ENCODE measurements at regions of chr3 and their contacts with region 1.

Region 1: GRCh38 chr3:48439820-48440589 is at the starts of genes CCDC51 and TMA7:
- DNase-seq: peak; percentile 94 to 97
- H3K4me3 ChIP-seq: peak within 1 kb of the TSS; percentile 80 to 99 (median 94)
- H3K27ac ChIP-seq: peak within 1 kb of the TSS; percentile 80
- H3K4me1 ChIP-seq: peaks cover 0 to 8% (median 3%) of the 10 kb centered on the region in 4 experiments; a peak in 5 of 7 replicates
- H3K27me3 ChIP-seq: no peaks in the 10 kb centered on the region
- CTCF ChIP-seq: no peak
- EP300 ChIP-seq: no peak
- POLR2A ChIP-seq: peak; percentile 77 to 88; a peak in 2 of 3 replicates
- RAD21 ChIP-seq: no peak
- total RNA-seq, gene CCDC51: 20.3 and 21.3 TPM in 2 replicates
- total RNA-seq, gene TMA7: 305 and 322 TPM in 2 replicates

Region 2: DNA sequence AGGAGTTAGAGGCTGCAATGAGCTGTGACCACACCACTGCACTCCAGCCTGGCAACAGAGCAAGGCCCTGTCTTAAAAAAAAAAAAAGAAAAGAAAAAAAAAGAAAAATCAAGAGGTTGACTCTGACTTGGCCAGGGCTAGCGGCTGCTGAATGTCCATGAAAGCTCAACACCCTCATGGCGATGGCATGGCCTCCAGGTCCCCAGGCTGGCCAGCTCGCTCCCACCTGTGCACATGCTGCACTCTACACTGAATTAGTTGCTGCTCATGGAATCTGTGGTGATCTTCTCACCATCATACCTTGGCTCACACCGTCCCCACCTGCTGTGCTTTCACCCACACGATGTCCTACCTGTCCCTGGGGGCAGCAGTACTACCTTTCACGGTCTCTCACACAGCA is 240.0 kb before region 1 on chr3:
- CTCF ChIA-PET with region 1: interaction called, 23 read pairs
- POLR2A ChIA-PET with region 1: interaction called, 7 read pairs
- DNase-seq: no peak
- H3K4me3 ChIP-seq: no peak overlapping the region
- H3K27ac ChIP-seq: no peak overlapping the region
- H3K4me1 ChIP-seq: peaks cover 0 to 6% (median 5%) of the 10 kb centered on the region in 4 experiments; a peak in 6 of 7 replicates
- H3K27me3 ChIP-seq: no peaks in the 10 kb centered on the region
- CTCF ChIP-seq: no peak
- EP300 ChIP-seq: no peak
- POLR2A ChIP-seq: no peak
- RAD21 ChIP-seq: no peak

Region 3: GRCh38 chr3:48344867-48345507 is 95.0 kb before region 1 on chr3:
- CTCF ChIA-PET with region 1: interaction called, 10 read pairs
- POLR2A ChIA-PET with region 1: no interaction called
- DNase-seq: no peak
- H3K4me3 ChIP-seq: no peak overlapping the region
- H3K27ac ChIP-seq: no peak overlapping the region
- H3K4me1 ChIP-seq: no peaks in the 10 kb centered on the region
- H3K27me3 ChIP-seq: no peaks in the 10 kb centered on the region
- CTCF ChIP-seq: no peak
- EP300 ChIP-seq: no peak
- POLR2A ChIP-seq: no peak
- RAD21 ChIP-seq: no peak

Region 4: DNA sequence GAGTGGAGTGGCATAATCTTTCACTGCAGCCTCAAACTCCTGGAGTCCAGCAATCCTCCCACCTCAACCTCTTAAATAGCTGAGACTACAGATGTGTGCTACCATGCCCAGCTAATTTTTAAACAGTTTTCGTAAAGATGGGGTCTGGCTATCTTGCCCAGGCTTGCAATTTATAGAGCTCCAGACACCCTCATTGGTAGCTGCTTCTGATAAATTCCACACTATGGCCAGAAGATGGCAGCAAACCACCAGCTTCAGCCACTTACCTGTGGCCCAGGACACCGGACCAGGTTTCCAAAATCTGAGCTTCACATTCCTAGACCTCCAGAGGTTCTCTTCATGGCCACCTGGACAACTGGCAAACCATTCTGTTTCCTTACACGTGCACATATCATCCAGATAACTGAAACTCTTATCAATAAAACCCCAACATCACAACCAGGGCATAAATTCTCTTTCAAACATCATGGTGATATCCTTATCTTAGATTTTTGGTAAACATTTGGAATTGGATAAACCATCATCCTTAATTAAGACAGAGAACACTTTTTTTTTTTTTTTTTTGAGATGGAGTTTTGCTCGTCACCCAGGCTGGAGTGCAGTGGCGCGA is 39.1 kb before region 1 on chr3:
- CTCF ChIA-PET with region 1: interaction called, 220 read pairs
- POLR2A ChIA-PET with region 1: interaction called, 650 read pairs
- DNase-seq: peak; percentile 21 to 51
- H3K4me3 ChIP-seq: no peak overlapping the region
- H3K27ac ChIP-seq: no peak overlapping the region
- H3K4me1 ChIP-seq: peaks cover 0 to 7% (median 4%) of the 10 kb centered on the region in 4 experiments; a peak in 3 of 7 replicates
- H3K27me3 ChIP-seq: no peaks in the 10 kb centered on the region
- CTCF ChIP-seq: peak in 2 of 3 experiments; percentile 87 to 93; a peak in 3 of 4 replicates
- EP300 ChIP-seq: no peak
- POLR2A ChIP-seq: no peak
- RAD21 ChIP-seq: peak; percentile 88 to 91

Region 5: GRCh38 chr3:48429317-48429959 is 10.6 kb before region 1 on chr3:
- CTCF ChIA-PET with region 1: interaction called, 28 read pairs
- POLR2A ChIA-PET with region 1: interaction called, 233 read pairs
- DNase-seq: peak in 1 of 2 experiments; percentile 90
- H3K4me3 ChIP-seq: peak overlapping the region; percentile 66 to 85 (median 76)
- H3K27ac ChIP-seq: peak overlapping the region; percentile 94
- H3K4me1 ChIP-seq: peaks cover 7 to 37% (median 22%) of the 10 kb centered on the region in 4 experiments
- H3K27me3 ChIP-seq: no peaks in the 10 kb centered on the region
- CTCF ChIP-seq: no peak
- EP300 ChIP-seq: no peak
- POLR2A ChIP-seq: peak in 1 of 2 experiments; percentile 55; a peak in 2 of 3 replicates
- RAD21 ChIP-seq: no peak

Region 6: DNA sequence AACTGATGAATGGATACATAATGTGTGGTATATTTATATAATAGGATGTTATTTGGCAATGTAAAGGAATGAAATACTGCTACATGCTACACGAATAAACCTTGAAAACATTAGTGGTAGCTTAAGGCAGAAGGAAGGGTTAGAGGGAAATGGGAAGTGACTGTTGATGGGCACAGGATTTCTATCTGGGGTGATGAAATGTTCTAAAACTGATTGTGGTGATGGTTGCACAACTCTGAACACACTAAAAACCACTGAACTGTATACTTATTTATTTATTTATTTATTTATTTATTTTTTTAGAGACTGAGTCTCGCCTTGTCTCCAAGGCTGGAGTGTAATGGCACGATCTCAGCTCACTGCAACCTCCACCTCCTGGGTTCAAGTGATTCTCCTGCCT is 88.7 kb after region 1 on chr3:
- CTCF ChIA-PET with region 1: interaction called, 11 read pairs
- POLR2A ChIA-PET with region 1: interaction called, 4 read pairs
- DNase-seq: no peak
- H3K4me3 ChIP-seq: no peak overlapping the region
- H3K27ac ChIP-seq: no peak overlapping the region
- H3K4me1 ChIP-seq: no peaks in the 10 kb centered on the region
- H3K27me3 ChIP-seq: no peaks in the 10 kb centered on the region
- CTCF ChIP-seq: no peak
- EP300 ChIP-seq: no peak
- POLR2A ChIP-seq: no peak
- RAD21 ChIP-seq: no peak